OCI-LY7 (cell line): ENCODE measurements at regions of chr4 and their contacts with region 1.

Region 1: GRCh38 chr4:17915439-17915838 is 104.7 kb downstream of the NCAPG start:
- DNase-seq: no peak
- H3K4me3 ChIP-seq: no peak overlapping the region
- H3K27ac ChIP-seq: no peak overlapping the region
- H3K4me1 ChIP-seq: no peaks in the 10 kb centered on the region
- CTCF ChIP-seq: no peak

Region 2: GRCh38 chr4:17933126-17933525 is 17.7 kb after region 1 on chr4:
- CTCF ChIA-PET with region 1: no interaction called
- POLR2A ChIA-PET with region 1: interaction called, 10 read pairs
- intact Hi-C with region 1: no loop called
- DNase-seq: no peak
- H3K4me3 ChIP-seq: no peak overlapping the region
- H3K27ac ChIP-seq: no peak overlapping the region
- H3K4me1 ChIP-seq: no peaks in the 10 kb centered on the region
- CTCF ChIP-seq: no peak